Ascending aorta (tissue), 2 donors: ENCODE measurements at regions of chr1 and their contacts with region 1.

Region 1: DNA sequence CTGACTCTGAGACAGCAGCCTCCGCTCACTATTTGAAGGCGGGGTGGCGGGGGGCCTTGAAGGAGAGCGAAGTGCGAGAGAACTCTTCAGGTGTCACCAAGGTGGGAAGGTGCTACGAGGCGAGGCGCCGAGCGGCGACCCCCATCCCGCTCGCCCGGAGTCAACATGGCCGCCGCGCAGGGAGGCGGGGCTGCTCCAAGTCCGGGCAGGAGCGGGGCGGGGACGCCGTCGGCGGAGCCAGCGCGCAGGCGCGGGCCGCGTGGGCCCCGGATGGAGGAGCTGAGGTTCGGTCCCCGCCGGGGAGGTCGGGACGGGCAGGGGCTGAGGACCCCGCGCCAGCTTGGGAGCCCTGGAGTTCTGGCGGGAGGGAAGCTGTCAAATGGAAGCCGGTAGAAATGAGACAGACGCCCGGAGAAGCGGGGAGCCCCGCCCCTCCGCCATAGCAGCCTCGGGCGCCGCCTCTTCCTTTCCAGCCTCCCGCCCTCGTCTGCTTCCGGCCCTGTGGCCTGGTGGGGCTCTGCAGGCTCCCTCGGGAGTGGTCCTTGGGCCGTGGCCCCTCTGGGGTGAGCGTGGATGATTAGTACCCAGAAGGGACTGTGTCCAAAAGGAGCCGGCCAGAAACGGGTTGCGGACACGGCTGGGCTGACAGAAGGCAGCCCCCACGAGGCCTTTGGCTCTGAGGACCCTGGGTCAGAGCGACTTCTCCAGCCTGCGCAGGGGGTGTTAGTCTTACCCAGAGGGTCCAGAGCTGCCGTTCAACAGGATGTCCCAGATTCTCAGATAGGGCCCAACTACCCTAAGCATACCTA is at the start of gene PIGV:
- DNase-seq: peak; percentile 47 to 92
- H3K4me3 ChIP-seq: peak within 1 kb of the TSS; percentile 60 to 74
- H3K27ac ChIP-seq: peak within 1 kb of the TSS; percentile 98 to 99
- H3K4me1 ChIP-seq: peaks cover 9 to 25% of the 10 kb centered on the region in 2 donors
- H3K27me3 ChIP-seq: no peaks in the 10 kb centered on the region
- CTCF ChIP-seq: peak in 2 of 3 experiments; percentile 10 to 41
- total RNA-seq, gene PIGV: 8.8 TPM

Region 2: GRCh38 chr1:26500488-26501175 is 287.3 kb before region 1 on chr1:
- intact Hi-C with region 1: loop called (anchors 1 kb)
- DNase-seq: peak; percentile 41 to 92
- H3K4me3 ChIP-seq: peak overlapping the region; percentile 90 to 95
- H3K27ac ChIP-seq: peak overlapping the region; percentile 81 to 83
- H3K4me1 ChIP-seq: peaks cover 0 to 7% of the 10 kb centered on the region in 2 donors
- H3K27me3 ChIP-seq: no peaks in the 10 kb centered on the region
- CTCF ChIP-seq: no peak

Region 3: DNA sequence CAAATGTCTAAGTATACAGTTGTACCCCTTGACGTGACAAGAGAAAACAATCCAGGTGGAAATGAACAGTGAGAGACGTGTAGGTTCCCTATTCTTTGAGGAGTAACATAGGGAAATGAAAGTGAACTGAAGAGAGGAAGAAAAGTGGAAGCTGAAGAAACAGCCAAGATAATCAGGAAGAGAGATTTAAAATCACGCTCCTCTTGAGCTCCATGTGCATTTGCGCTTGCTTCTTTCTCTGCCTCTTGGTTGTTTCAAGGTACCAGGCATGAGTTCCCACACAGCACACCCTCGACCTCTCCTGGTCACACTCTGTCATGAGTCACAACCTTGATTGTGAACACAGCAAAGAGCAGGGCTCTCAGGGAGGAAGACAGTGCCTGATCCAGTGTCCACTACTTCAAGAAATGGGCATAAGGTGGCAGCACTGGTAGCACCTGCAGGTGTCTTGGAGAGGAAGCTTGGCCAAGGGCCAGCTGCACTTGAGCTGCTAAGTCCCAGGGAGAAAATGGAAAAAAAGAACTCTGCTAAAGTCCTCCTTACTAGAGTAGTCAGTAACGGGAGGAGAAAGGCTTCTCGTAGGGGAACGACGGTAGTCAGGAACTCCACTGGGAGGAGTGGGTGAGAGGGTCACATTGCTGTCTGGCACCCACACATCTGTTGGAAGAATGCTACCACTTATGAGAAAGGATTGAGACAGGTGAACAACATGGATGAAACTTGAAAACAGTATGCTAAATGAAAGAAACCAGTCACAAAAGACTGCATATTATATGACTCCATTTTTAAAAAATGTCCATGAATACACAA is 110.4 kb before region 1 on chr1:
- intact Hi-C with region 1: loop called (anchors 2 kb)
- DNase-seq: peak; percentile 36 to 90
- H3K4me3 ChIP-seq: peak overlapping the region; percentile 25 to 47
- H3K27ac ChIP-seq: peak overlapping the region; percentile 40 to 42
- H3K4me1 ChIP-seq: peaks cover 0 to 2% of the 10 kb centered on the region in 2 donors
- H3K27me3 ChIP-seq: no peaks in the 10 kb centered on the region
- CTCF ChIP-seq: peak; percentile 60 to 81 (median 71)

Region 4: GRCh38 chr1:26723013-26723991 is 64.6 kb before region 1 on chr1:
- intact Hi-C with region 1: loop called (anchors 1 kb)
- DNase-seq: peak; percentile 56 to 92
- H3K4me3 ChIP-seq: peak overlapping the region in 1 of 2 donors; percentile 29
- H3K27ac ChIP-seq: peak overlapping the region; percentile 69 to 70
- H3K4me1 ChIP-seq: peaks cover 15 to 81% of the 10 kb centered on the region in 2 donors
- H3K27me3 ChIP-seq: no peaks in the 10 kb centered on the region
- CTCF ChIP-seq: no peak

Region 5: DNA sequence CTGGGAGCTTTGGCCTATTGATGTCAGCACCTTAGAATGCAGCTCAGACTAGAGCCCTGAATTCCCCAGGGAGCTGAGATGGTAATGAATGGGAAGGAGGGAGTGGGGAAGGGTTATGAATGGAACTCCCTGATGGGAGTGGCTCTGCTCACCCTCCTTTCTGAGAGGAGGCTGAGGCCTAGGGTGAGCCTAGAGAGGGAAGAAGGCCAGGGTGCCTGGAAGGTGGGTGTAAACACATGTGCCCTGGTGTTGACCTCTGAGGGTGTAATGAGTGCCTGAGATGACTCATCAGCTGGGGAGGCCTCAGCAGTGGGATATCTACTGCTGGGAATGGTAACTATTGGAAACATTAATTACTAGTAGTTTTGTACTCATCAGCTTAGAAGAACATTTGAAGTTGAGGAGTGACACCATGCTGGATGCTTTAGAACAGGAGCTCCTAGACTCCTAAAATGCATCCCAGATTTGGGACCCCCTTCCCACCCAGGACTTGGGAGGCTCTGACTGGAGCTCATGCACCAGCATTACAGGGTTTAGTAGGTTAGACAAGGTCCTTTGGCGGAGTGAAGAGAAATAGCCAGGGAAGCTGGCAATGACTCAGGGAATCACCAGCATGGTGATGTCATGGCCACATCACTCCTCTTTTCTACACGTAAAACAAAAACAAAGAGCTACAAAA is 16.1 kb before region 1 on chr1:
- intact Hi-C with region 1: loop called (anchors 2 kb)
- DNase-seq: peak in 1 of 2 donors; percentile 79
- H3K4me3 ChIP-seq: no peak overlapping the region
- H3K27ac ChIP-seq: peak overlapping the region; percentile 79 to 86
- H3K4me1 ChIP-seq: peaks cover 10 to 36% of the 10 kb centered on the region in 2 donors
- H3K27me3 ChIP-seq: no peaks in the 10 kb centered on the region
- CTCF ChIP-seq: no peak